Naive thymus-derived CD4-positive, alpha-beta T cell (primary cell): ENCODE measurements at regions of chr2 and their contacts with region 1.

Region 1: DNA sequence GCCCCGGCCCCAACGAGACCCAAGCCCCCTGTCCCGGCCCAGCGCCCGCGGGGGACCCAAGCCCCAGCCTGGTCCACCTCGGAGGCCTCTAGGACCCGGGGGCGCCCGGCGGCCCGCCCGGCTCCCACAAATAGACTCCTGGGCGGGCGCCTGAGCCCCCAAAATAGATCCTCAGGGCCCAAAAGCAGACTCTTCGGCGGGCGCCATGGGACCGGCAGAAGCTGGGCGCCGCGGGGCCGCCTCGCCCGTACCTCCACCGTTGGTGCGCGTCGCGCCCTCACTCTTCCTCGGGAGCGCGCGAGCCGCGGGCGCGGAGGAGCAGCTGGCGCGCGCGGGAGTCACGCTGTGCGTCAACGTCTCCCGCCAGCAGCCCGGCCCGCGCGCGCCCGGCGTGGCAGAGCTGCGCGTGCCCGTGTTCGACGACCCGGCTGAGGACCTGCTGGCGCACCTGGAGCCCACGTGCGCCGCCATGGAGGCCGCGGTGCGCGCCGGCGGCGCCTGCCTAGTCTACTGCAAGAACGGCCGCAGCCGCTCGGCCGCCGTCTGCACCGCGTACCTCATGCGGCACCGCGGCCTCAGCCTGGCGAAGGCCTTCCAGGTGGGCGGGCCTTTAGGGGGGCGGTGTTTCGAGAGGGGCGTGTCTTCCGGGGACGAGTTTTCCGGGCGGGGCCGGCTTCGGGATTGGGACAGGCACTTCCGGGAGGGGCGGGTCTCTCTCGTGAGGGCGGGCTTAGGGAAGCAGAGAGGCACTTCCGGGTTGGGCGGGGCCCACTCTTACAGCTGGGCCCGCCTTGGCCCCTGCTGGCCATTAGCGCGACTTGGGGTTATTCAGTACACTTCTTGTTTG is 546 bp downstream of the DUSP28 start:
- DNase-seq: peak; percentile 98 to 100 (median 99)
- ATAC-seq: peak; percentile 79
- H3K4me3 ChIP-seq: peak overlapping the region; percentile 82
- H3K4me3 Mint-ChIP-seq: peak overlapping the region; percentile 81 to 96 (median 86)
- H3K27ac ChIP-seq: peak overlapping the region; percentile 93
- H3K27ac Mint-ChIP-seq: peak overlapping the region; percentile 85 to 97 (median 90)
- H3K4me1 ChIP-seq: peaks cover 72 to 74% of the 10 kb centered on the region in 2 donors
- H3K4me1 Mint-ChIP-seq: peaks cover 53 to 79% (median 76%) of the 10 kb centered on the region in 7 donors
- H3K27me3 ChIP-seq: no peaks in the 10 kb centered on the region
- H3K27me3 Mint-ChIP-seq: no peaks in the 10 kb centered on the region

Region 2: DNA sequence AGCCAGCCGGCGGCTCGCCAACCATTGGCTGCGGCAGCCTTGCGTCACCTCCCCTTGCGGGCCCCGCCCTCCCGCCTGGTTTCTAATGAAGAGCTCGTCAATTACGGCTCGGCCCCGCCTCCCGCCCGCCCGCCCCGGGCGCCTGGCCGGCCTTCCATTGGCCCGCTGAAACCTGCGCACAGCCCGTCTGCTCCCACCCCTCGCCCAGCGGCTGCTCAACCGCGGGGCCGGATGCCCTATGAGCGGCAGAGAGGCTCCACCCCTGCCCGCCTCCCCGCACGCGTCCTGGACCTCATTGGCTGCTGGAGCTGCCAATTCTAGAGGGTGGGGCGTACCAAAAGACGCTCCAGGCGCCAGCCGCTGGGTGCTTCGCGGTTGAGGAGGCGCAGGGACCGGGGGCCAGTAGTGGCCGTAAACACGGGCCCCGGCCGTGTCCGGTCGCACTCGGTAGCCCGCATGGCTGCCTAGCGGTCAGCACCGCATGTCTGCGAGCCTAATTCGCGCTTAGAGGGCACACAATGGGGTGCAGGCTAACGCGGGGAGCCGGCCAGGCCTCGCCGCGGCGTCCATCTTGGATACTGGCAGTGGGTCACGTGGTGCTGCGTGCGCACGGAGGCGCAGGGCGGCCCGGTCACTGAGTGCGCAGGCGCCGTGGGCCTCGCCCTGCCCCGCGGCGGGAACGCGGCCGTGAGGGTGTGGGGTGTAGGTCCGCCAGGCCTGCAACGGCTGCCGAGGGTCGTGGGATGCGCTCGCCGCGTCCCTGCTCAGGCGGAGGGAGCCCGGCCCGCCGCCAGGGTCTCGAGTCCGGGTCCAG is 1159.4 kb before region 1 on chr2:
- CTCF ChIA-PET with region 1: no interaction called
- POLR2A ChIA-PET with region 1: no interaction called
- intact Hi-C with region 1: loop called (anchors 1 to 10 kb)
- DNase-seq: peak; percentile 98 to 100 (median 100)
- ATAC-seq: peak; percentile 92
- H3K4me3 ChIP-seq: peak overlapping the region; percentile 100
- H3K4me3 Mint-ChIP-seq: peak overlapping the region; percentile 86 to 96 (median 92)
- H3K27ac ChIP-seq: peak overlapping the region; percentile 97
- H3K27ac Mint-ChIP-seq: peak overlapping the region; percentile 96 to 99 (median 99)
- H3K4me1 ChIP-seq: peaks cover 17 to 26% of the 10 kb centered on the region in 2 donors
- H3K4me1 Mint-ChIP-seq: peaks cover 28 to 51% (median 43%) of the 10 kb centered on the region in 7 donors
- H3K27me3 ChIP-seq: no peaks in the 10 kb centered on the region
- H3K27me3 Mint-ChIP-seq: peaks cover 0 to 16% (median 0%) of the 10 kb centered on the region in 5 donors

Region 3: GRCh38 chr2:240579771-240580614 is 19.3 kb after region 1 on chr2:
- CTCF ChIA-PET with region 1: interaction called, 61 read pairs
- POLR2A ChIA-PET with region 1: interaction called, 264 read pairs
- intact Hi-C with region 1: loop called in 1 of 2 experiments (anchors 1 kb)
- DNase-seq: peak; percentile 52 to 81 (median 67)
- ATAC-seq: peak; percentile 91
- H3K4me3 ChIP-seq: no peak overlapping the region
- H3K4me3 Mint-ChIP-seq: peak overlapping the region in 9 of 10 donors; percentile 9 to 58 (median 45)
- H3K27ac ChIP-seq: peak overlapping the region; percentile 33
- H3K27ac Mint-ChIP-seq: peak overlapping the region; percentile 36 to 87 (median 78)
- H3K4me1 ChIP-seq: peaks cover 19 to 22% of the 10 kb centered on the region in 2 donors
- H3K4me1 Mint-ChIP-seq: peaks cover 33 to 62% (median 48%) of the 10 kb centered on the region in 7 donors
- H3K27me3 ChIP-seq: no peaks in the 10 kb centered on the region
- H3K27me3 Mint-ChIP-seq: no peaks in the 10 kb centered on the region

Region 4: GRCh38 chr2:240704651-240705050 is 143.9 kb after region 1 on chr2:
- CTCF ChIA-PET with region 1: interaction called, 3 read pairs
- POLR2A ChIA-PET with region 1: no interaction called
- intact Hi-C with region 1: loop called in 1 of 2 experiments (anchors 5 kb)
- DNase-seq: peak in 7 of 9 donors; percentile 38 to 62 (median 55)
- ATAC-seq: peak; percentile 62
- H3K4me3 ChIP-seq: no peak overlapping the region
- H3K4me3 Mint-ChIP-seq: peak overlapping the region; percentile 5 to 78 (median 57)
- H3K27ac ChIP-seq: no peak overlapping the region
- H3K27ac Mint-ChIP-seq: peak overlapping the region in 5 of 9 donors; percentile 1 to 78 (median 16)
- H3K4me1 ChIP-seq: peaks cover 10 to 22% of the 10 kb centered on the region in 2 donors
- H3K4me1 Mint-ChIP-seq: peaks cover 15 to 20% (median 17%) of the 10 kb centered on the region in 7 donors
- H3K27me3 ChIP-seq: peaks cover 0 to 3% of the 10 kb centered on the region in 2 donors
- H3K27me3 Mint-ChIP-seq: peaks cover 5 to 46% (median 10%) of the 10 kb centered on the region in 5 donors

Region 5: DNA sequence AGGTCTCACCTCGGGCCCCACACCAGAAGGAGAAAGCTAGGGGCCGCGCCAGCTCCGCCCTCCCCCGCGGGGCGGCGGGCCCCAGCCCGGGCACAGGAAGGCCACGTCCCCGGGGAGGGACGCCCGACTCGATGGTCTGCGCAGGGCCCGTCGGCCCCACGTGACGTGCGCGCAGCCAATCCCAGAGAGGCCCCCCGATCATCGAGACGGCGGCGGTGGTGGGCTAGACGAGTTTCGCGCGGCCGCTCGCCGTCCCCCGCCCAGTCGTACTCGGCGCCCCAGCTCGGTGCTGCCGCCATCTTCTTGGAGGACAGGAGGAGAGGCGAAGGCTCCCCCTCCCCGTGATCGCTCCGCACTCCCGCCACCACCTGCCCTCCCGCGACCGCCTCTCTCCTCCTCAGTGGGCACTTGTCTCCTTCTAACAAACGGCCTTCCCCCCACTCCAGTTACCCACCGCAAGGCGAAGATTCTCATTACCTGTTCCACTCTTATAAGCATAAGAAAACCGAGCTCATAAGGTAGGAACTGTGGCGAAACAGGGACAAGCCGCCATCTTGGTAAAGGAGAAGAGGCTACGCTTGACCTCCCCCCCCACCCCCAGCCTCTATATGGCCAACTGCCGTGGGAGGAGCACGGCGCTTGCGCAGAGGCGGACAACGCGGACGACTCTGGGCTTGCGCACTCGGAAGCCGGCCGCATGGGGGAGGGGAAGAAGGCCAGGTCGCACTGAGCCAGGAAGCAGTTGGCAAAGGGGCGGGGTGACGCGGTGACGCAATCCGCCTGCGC is 754.6 kb after region 1 on chr2 and contains the start of gene HDLBP:
- CTCF ChIA-PET with region 1: no interaction called
- POLR2A ChIA-PET with region 1: interaction called, 3 read pairs
- intact Hi-C with region 1: loop called (anchors 1 kb)
- DNase-seq: peak; percentile 100
- ATAC-seq: peak; percentile 87
- H3K4me3 ChIP-seq: peak within 1 kb of the TSS; percentile 98
- H3K4me3 Mint-ChIP-seq: peak within 1 kb of the TSS; percentile 93 to 100 (median 98)
- H3K27ac ChIP-seq: peak within 1 kb of the TSS; percentile 95
- H3K27ac Mint-ChIP-seq: peak within 1 kb of the TSS; percentile 96 to 100 (median 99)
- H3K4me1 ChIP-seq: peaks cover 44 to 48% of the 10 kb centered on the region in 2 donors
- H3K4me1 Mint-ChIP-seq: peaks cover 62 to 84% (median 75%) of the 10 kb centered on the region in 7 donors
- H3K27me3 ChIP-seq: no peaks in the 10 kb centered on the region
- H3K27me3 Mint-ChIP-seq: no peaks in the 10 kb centered on the region
- total RNA-seq, gene HDLBP: 127 to 231 (median 169) TPM

Region 6: GRCh38 chr2:241702132-241703031 is 1141.7 kb after region 1 on chr2:
- CTCF ChIA-PET with region 1: no interaction called
- POLR2A ChIA-PET with region 1: no interaction called
- intact Hi-C with region 1: loop called in 1 of 2 experiments (anchors 10 kb)
- DNase-seq: peak; percentile 83 to 92 (median 89)
- ATAC-seq: peak; percentile 89
- H3K4me3 ChIP-seq: peak overlapping the region; percentile 74
- H3K4me3 Mint-ChIP-seq: peak overlapping the region; percentile 74 to 89 (median 84)
- H3K27ac ChIP-seq: peak overlapping the region; percentile 75
- H3K27ac Mint-ChIP-seq: peak overlapping the region; percentile 75 to 87 (median 82)
- H3K4me1 ChIP-seq: peaks cover 7 to 12% of the 10 kb centered on the region in 2 donors
- H3K4me1 Mint-ChIP-seq: peaks cover 11 to 38% (median 26%) of the 10 kb centered on the region in 7 donors
- H3K27me3 ChIP-seq: no peaks in the 10 kb centered on the region
- H3K27me3 Mint-ChIP-seq: no peaks in the 10 kb centered on the region